ENCODE measurements at regions of chr1 and their contacts with region 1.

Region 1: GRCh38 chr1:108125312-108126138 is 74.6 kb downstream of the SLC25A24 start:
- DNase-seq: peak; percentile 60
- H3K4me3 ChIP-seq: no peak overlapping the region
- H3K27ac ChIP-seq: no peak overlapping the region
- H3K4me1 ChIP-seq: peaks cover 0 to 4% (median 0%) of the 10 kb centered on the region in 4 donors
- H3K27me3 ChIP-seq: peaks cover 3% of the 10 kb centered on the region
- CTCF ChIP-seq: peak; percentile 79 to 92 (median 88)
- EP300 ChIP-seq: no peak
- POLR2A ChIP-seq: no peak

Region 2: DNA sequence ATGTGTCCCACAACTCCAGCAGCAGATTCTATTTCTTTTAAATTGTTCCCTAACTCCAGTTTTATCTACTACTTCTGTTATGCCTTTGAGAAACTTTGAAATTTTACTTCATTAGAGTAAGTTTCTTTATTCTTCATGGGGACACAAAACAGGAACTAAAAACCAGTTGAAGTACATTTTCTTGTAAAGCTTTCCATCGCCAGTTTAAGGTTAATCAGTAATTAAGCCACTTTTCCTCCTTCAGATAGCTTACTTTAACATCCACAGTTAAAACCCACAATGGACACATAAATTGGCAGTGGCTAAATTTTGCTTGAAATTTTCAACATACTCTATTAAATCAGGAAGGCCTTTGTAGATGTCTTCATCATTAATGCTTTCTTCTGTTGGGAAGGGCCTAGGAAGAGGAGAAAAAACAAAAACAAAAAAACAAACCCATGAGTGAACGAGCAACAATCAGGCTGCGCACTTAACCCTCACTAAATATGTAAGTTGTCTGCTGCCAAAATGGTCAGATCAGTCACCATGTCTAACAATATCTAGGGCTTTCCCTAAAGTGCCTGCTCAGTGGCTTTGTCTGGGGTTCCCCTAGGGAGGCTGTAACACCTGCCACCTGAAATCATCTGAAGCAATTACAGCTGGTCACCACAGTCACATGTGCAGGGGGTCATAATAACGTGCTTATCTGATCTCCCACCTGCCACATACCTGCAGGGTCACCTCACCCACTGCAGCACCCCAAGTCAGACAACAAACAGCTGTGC is 348.4 kb before region 1 on chr1:
- in situ Hi-C with region 1: loop called in 2 of 4 experiments (anchors 5 kb)
- intact Hi-C with region 1: loop called (anchors 5 kb)
- DNase-seq: no peak
- H3K4me3 ChIP-seq: no peak overlapping the region
- H3K27ac ChIP-seq: no peak overlapping the region
- H3K4me1 ChIP-seq: no peaks in the 10 kb centered on the region
- H3K27me3 ChIP-seq: no peaks in the 10 kb centered on the region
- CTCF ChIP-seq: no peak
- EP300 ChIP-seq: no peak
- POLR2A ChIP-seq: no peak

Region 3: DNA sequence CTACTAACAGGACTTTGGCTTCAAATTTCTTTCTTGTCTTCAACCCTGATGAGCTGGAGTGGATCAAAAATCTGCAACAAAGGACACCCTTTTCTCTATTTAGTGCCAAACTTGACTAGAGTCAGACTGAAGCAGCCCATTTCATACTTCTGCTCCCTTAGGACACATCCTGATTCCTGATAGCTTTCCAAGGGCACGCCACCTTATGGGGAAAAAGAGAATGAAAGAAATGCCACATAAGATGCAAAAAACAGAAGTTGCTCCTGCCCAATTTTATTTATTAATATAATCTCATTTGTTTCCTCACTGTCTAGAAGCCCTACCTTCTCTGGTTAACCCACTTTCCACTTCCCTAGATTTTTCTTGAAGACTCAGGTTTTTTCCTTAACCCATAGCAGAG is 191.0 kb after region 1 on chr1:
- in situ Hi-C with region 1: no loop called
- intact Hi-C with region 1: no loop called
- DNase-seq: no peak
- H3K4me3 ChIP-seq: no peak overlapping the region
- H3K27ac ChIP-seq: no peak overlapping the region
- H3K4me1 ChIP-seq: no peaks in the 10 kb centered on the region
- H3K27me3 ChIP-seq: peaks cover 10% of the 10 kb centered on the region
- CTCF ChIP-seq: peak in 1 of 5 experiments; percentile 15
- EP300 ChIP-seq: no peak
- POLR2A ChIP-seq: no peak

Measured in transverse colon (tissue), 4 donors.